ENCODE measurements at regions of chr22 and their contacts with region 1.

Region 1: GRCh38 chr22:41169157-41169556 is 36.0 kb upstream of the L3MBTL2 start:
- DNase-seq: no peak
- ATAC-seq: no peak
- H3K4me3 ChIP-seq: no peak overlapping the region
- H3K4me3 Mint-ChIP-seq: no peak overlapping the region
- H3K27ac ChIP-seq: no peak overlapping the region
- H3K27ac Mint-ChIP-seq: no peak overlapping the region
- H3K4me1 ChIP-seq: no peaks in the 10 kb centered on the region
- H3K4me1 Mint-ChIP-seq: no peaks in the 10 kb centered on the region
- H3K27me3 ChIP-seq: no peaks in the 10 kb centered on the region
- H3K27me3 Mint-ChIP-seq: no peaks in the 10 kb centered on the region
- CTCF ChIP-seq: no peak

Region 2: GRCh38 chr22:40911772-40912171 is 257.4 kb before region 1 on chr22:
- CTCF ChIA-PET with region 1: no interaction called
- POLR2A ChIA-PET with region 1: no interaction called
- intact Hi-C with region 1: loop called in 1 of 2 experiments (anchors 10 kb)
- DNase-seq: no peak
- ATAC-seq: no peak
- H3K4me3 ChIP-seq: no peak overlapping the region
- H3K4me3 Mint-ChIP-seq: no peak overlapping the region
- H3K27ac ChIP-seq: no peak overlapping the region
- H3K27ac Mint-ChIP-seq: no peak overlapping the region
- H3K4me1 ChIP-seq: no peaks in the 10 kb centered on the region
- H3K4me1 Mint-ChIP-seq: no peaks in the 10 kb centered on the region
- H3K27me3 ChIP-seq: no peaks in the 10 kb centered on the region
- H3K27me3 Mint-ChIP-seq: no peaks in the 10 kb centered on the region
- CTCF ChIP-seq: no peak

Region 3: DNA sequence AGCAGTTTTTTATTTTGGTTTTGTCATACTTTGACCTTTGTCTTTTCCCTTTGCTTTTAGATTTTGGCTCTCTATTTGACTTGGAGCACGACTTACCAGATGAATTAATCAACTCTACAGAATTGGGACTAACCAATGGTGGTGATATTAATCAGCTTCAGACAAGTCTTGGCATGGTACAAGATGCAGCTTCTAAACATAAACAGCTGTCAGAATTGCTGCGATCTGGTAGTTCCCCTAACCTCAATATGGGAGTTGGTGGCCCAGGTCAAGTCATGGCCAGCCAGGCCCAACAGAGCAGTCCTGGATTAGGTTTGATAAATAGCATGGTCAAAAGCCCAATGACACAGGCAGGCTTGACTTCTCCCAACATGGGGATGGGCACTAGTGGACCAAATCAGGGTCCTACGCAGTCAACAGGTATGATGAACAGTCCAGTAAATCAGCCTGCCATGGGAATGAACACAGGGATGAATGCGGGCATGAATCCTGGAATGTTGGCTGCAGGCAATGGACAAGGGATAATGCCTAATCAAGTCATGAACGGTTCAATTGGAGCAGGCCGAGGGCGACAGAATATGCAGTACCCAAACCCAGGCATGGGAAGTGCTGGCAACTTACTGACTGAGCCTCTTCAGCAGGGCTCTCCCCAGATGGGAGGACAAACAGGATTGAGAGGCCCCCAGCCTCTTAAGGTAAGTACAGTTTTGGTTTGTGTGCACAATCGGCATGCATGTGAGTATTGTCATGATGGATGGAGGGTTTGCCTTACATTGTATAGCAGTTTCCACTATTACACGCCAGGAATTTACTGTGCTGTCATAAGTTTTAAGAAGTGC is 51.8 kb before region 1 on chr22:
- CTCF ChIA-PET with region 1: no interaction called
- POLR2A ChIA-PET with region 1: no interaction called
- intact Hi-C with region 1: loop called in 1 of 2 experiments (anchors 10 kb)
- DNase-seq: no peak
- ATAC-seq: no peak
- H3K4me3 ChIP-seq: no peak overlapping the region
- H3K4me3 Mint-ChIP-seq: no peak overlapping the region
- H3K27ac ChIP-seq: no peak overlapping the region
- H3K27ac Mint-ChIP-seq: peak overlapping the region; percentile 71
- H3K4me1 ChIP-seq: peaks cover 17% of the 10 kb centered on the region
- H3K4me1 Mint-ChIP-seq: peaks cover 69% of the 10 kb centered on the region
- H3K27me3 ChIP-seq: no peaks in the 10 kb centered on the region
- H3K27me3 Mint-ChIP-seq: no peaks in the 10 kb centered on the region
- CTCF ChIP-seq: no peak

Region 4: GRCh38 chr22:41127451-41127850 is 41.7 kb before region 1 on chr22:
- CTCF ChIA-PET with region 1: no interaction called
- POLR2A ChIA-PET with region 1: no interaction called
- intact Hi-C with region 1: no loop called
- DNase-seq: no peak
- ATAC-seq: no peak
- H3K4me3 ChIP-seq: no peak overlapping the region
- H3K4me3 Mint-ChIP-seq: no peak overlapping the region
- H3K27ac ChIP-seq: no peak overlapping the region
- H3K27ac Mint-ChIP-seq: no peak overlapping the region
- H3K4me1 ChIP-seq: no peaks in the 10 kb centered on the region
- H3K4me1 Mint-ChIP-seq: peaks cover 13% of the 10 kb centered on the region
- H3K27me3 ChIP-seq: no peaks in the 10 kb centered on the region
- H3K27me3 Mint-ChIP-seq: no peaks in the 10 kb centered on the region
- CTCF ChIP-seq: no peak